ENCODE measurements at regions of chr6 and their contacts with region 1.

Region 1: DNA sequence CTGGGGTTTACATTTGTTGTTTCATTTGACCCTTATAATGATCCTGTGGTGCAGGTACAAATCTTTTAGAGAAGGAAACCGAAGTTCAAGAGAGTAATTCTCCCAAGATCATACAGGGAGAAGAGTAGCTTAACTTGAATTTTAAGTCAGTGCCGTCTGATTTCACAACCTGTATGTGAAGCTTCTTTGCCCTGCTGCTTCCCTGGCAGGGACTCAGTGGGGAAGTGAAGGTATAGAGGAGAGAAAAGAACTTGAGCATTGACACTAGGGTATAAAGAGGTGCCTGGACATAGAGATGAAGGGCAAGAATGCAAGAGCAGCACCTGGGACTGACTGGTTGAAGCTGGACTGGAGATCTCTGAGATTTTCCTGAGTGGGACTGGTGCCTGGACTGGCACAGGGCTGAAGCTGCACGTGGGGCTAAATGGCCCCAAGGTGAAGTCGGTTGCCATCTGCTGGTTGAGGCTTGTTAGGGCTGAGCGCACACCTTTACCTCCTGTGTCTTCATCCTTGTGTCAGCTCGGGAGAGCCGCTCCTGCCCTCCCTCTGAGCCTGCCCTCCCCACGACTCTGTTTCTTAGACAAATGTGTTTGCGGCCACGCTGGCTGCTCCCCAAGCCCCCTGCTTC is 41.8 kb downstream of the FARS2 start:
- DNase-seq: peak; percentile 71
- ATAC-seq: peak; percentile 99
- H3K4me3 Mint-ChIP-seq: no peak overlapping the region
- H3K27ac Mint-ChIP-seq: no peak overlapping the region
- H3K4me1 Mint-ChIP-seq: peaks cover 15% of the 10 kb centered on the region
- H3K27me3 Mint-ChIP-seq: no peaks in the 10 kb centered on the region
- CTCF ChIP-seq: peak; percentile 39; the same call in 1 of the 2 replicates

Region 2: GRCh38 chr6:5214570-5215052 is 88.5 kb before region 1 on chr6:
- CTCF ChIA-PET with region 1: interaction called, 26 read pairs
- POLR2A ChIA-PET with region 1: no interaction called
- DNase-seq: peak; percentile 82
- ATAC-seq: peak; percentile 98
- H3K4me3 Mint-ChIP-seq: no peak overlapping the region
- H3K27ac Mint-ChIP-seq: no peak overlapping the region
- H3K4me1 Mint-ChIP-seq: peaks cover 20% of the 10 kb centered on the region
- H3K27me3 Mint-ChIP-seq: no peaks in the 10 kb centered on the region
- CTCF ChIP-seq: peak; percentile 94

Region 3: DNA sequence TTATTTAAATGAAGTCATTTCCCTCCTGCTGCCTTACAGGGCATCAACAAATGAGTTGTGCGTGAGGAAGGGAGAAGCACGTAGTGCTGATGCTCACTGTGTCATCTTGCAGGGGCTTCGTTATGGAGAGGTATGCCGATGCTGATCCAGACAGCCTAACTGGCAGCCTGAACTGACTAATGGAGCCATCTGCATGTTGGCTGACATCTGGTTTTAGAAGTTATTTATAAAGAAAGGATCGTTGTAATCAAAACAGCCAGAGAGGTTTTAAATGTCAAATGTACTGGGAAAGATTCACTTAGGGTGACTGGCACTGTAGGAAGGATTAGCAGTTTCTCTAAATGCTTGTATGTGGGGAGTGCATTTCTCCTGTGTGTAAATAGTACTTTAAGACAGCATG is 12.8 kb after region 1 on chr6:
- CTCF ChIA-PET with region 1: interaction called, 16 read pairs
- POLR2A ChIA-PET with region 1: no interaction called
- DNase-seq: no peak
- ATAC-seq: no peak
- H3K4me3 Mint-ChIP-seq: no peak overlapping the region
- H3K27ac Mint-ChIP-seq: peak overlapping the region; percentile 44; the same call in 1 of the 2 replicates
- H3K4me1 Mint-ChIP-seq: peaks cover 40% of the 10 kb centered on the region
- H3K27me3 Mint-ChIP-seq: no peaks in the 10 kb centered on the region
- CTCF ChIP-seq: no peak

Region 4: DNA sequence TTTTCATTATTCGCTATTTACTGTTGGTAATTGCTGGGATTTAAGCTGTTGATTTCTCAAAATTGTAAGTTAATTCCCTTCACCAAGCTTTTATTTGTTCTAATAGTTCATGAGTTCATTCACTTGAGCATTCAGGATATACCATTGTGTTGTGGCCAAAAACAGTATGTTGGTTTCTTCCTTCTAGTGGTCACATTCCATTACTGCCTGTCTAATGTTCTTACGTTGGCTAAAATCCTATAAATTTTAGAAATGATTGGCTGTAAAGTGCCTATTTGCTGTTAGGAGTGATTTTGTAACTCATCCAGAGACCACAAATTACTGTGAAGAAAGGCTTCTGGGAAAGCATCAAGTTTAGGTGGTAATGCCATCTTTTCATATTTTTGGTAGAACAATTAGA is 34.5 kb after region 1 on chr6:
- CTCF ChIA-PET with region 1: no interaction called
- POLR2A ChIA-PET with region 1: no interaction called
- DNase-seq: no peak
- ATAC-seq: no peak
- H3K4me3 Mint-ChIP-seq: no peak overlapping the region
- H3K27ac Mint-ChIP-seq: no peak overlapping the region
- H3K4me1 Mint-ChIP-seq: peaks cover 6% of the 10 kb centered on the region
- H3K27me3 Mint-ChIP-seq: no peaks in the 10 kb centered on the region
- CTCF ChIP-seq: no peak

Region 5: GRCh38 chr6:5379647-5380242 is 76.6 kb after region 1 on chr6:
- CTCF ChIA-PET with region 1: interaction called, 14 read pairs
- POLR2A ChIA-PET with region 1: no interaction called
- DNase-seq: peak; percentile 61
- ATAC-seq: peak; percentile 84
- H3K4me3 Mint-ChIP-seq: no peak overlapping the region
- H3K27ac Mint-ChIP-seq: no peak overlapping the region
- H3K4me1 Mint-ChIP-seq: peaks cover 8% of the 10 kb centered on the region
- H3K27me3 Mint-ChIP-seq: no peaks in the 10 kb centered on the region
- CTCF ChIP-seq: peak; percentile 58; the same call in 1 of the 2 replicates

Region 6: DNA sequence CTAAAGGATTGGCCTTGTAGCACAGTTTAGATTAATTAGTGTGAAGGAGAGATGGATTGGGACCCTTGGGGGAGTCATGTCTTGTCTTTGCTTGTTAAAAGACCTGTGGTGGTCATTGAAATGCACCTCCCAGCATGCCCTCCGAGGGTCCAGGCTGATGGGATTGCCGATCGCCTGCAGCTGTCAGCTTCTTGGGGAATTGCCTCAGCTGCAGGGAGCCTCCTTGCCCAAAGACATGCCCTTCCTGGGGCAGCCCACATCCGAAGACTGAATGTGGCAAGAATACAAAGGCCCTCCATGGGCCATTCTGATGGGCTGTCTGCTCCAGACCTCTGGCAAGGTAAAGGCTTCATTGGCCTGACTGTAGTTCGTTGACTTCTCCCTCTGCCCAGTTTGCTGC is 108.9 kb after region 1 on chr6:
- CTCF ChIA-PET with region 1: no interaction called
- POLR2A ChIA-PET with region 1: no interaction called
- DNase-seq: peak; percentile 32
- ATAC-seq: peak; percentile 95
- H3K4me3 Mint-ChIP-seq: no peak overlapping the region
- H3K27ac Mint-ChIP-seq: peak overlapping the region; percentile 56
- H3K4me1 Mint-ChIP-seq: peaks cover 22% of the 10 kb centered on the region
- H3K27me3 Mint-ChIP-seq: no peaks in the 10 kb centered on the region; the same call in 1 of the 2 replicates
- CTCF ChIP-seq: no peak

Region 7: DNA sequence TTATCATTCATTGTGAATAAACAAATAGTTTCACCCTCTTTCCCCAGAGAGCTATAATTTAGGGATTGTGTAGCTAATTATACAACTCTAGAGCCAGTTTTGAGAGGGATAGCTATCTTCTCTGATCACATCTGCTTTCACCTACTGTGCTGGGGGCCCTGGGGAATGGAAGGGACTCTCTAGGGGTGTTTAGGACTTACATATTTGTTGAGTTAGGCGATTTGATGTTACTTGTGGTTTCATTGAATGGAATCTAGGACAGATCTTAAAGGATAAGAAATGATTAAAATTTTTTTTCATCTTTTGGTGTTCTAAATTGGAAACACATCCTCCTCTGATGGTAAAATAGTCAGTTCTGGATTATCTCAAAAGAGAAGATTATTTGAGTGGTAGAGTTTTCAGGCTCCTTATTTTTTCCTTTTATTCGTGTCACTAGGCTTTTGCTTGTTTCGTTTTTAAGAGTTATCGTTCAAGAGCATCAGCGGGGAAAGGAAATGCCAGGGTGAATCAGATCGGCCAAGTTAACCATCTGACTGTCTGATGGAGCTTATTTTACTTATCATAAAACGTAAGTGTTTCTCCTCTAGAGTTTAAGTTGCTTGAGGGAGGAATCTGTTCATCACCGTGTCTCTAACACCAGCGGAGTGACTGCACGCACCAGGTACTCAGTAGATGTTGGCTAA is 194.9 kb after region 1 on chr6:
- CTCF ChIA-PET with region 1: no interaction called
- POLR2A ChIA-PET with region 1: no interaction called
- DNase-seq: no peak
- ATAC-seq: no peak
- H3K4me3 Mint-ChIP-seq: no peak overlapping the region
- H3K27ac Mint-ChIP-seq: no peak overlapping the region
- H3K4me1 Mint-ChIP-seq: peaks cover 38% of the 10 kb centered on the region
- H3K27me3 Mint-ChIP-seq: no peaks in the 10 kb centered on the region
- CTCF ChIP-seq: no peak